ENCODE measurements at regions of chr4 and their contacts with region 1.

Region 1: GRCh38 chr4:100569196-100569595 is 51.4 kb upstream of the EMCN start:
- DNase-seq: no peak
- H3K4me3 ChIP-seq: no peak overlapping the region
- H3K27ac ChIP-seq: no peak overlapping the region
- H3K4me1 ChIP-seq: no peaks in the 10 kb centered on the region
- H3K27me3 ChIP-seq: no peaks in the 10 kb centered on the region
- CTCF ChIP-seq: no peak

Region 2: DNA sequence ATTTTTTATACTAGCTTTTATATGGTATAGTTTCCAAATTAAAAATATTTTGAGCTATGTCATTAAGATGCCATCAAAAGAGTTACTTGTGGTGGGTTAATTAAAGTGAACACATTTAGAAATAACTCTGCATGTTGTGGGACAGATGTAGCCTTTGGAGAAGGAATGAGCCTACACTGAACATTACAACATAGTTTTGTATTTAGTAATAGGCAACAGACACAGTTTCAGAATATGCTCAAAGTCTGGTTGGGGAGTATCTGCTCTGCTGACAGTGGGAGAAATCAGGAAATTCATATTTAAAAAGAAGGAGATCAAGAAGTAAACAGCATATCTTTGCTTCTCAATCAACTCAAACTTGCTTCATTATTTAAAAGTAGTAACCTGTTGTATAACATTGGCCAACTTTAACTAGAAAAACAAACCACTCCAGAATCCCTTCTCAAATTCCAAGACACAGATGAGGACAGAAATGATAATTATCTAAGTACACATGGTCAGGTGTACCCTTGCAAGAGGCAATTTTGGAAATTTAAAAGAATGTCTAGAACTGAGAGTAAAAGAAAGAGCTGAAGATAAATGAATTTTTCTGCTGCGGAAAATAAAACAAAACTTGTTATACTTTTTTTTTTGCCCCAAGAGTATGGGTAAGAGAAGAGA is 74.9 kb before region 1 on chr4:
- CTCF ChIA-PET with region 1: no interaction called
- POLR2A ChIA-PET with region 1: no interaction called
- intact Hi-C with region 1: no loop called
- DNase-seq: no peak
- H3K4me3 ChIP-seq: no peak overlapping the region
- H3K27ac ChIP-seq: peak overlapping the region; percentile 26
- H3K4me1 ChIP-seq: peaks cover 35% of the 10 kb centered on the region
- H3K27me3 ChIP-seq: no peaks in the 10 kb centered on the region
- CTCF ChIP-seq: no peak

Region 3: GRCh38 chr4:100581332-100581731 is 12.1 kb after region 1 on chr4:
- CTCF ChIA-PET with region 1: no interaction called
- POLR2A ChIA-PET with region 1: interaction called, 11 read pairs
- intact Hi-C with region 1: no loop called
- DNase-seq: no peak
- H3K4me3 ChIP-seq: no peak overlapping the region
- H3K27ac ChIP-seq: no peak overlapping the region
- H3K4me1 ChIP-seq: no peaks in the 10 kb centered on the region
- H3K27me3 ChIP-seq: no peaks in the 10 kb centered on the region
- CTCF ChIP-seq: no peak

Measured in A673 (cell line).